MCF 10A (cell line): ENCODE measurements at regions of chr5 and their contacts with region 1.

Region 1: DNA sequence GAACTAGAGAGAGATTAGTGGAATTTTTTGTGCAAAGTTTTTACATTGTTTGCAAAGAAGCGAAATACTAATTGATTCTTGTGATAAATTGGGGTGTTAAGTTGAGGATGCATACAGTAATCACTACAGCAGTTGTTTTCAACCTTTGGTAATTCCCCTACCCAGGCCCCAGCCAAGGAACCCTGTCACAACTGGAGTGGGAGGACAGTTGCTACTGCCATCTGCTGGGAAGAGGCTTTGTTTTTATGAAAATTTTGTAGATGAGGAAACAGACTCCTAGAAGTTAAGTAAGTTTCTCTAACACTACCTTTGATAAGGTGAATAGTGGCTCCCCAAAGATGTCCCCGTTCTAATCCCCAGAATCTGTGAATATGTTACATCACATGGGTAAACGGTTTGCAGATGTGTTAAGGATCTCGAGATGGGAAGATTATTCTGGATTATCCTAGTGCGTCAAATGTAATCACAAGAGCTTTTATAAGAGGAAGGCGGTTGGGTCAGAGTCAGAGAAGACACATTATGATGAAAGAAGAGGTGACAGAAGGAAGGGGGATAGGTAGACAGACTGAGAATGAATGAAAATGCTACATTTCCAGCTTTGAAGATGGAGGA is 34.0 kb upstream of the PPP1R2B start:
- DNase-seq: peak; percentile 8
- H3K4me3 Mint-ChIP-seq: no peak overlapping the region
- H3K27ac Mint-ChIP-seq: no peak overlapping the region
- H3K4me1 Mint-ChIP-seq: no peaks in the 10 kb centered on the region
- H3K27me3 Mint-ChIP-seq: no peaks in the 10 kb centered on the region
- CTCF ChIP-seq: peak; percentile 69

Region 2: DNA sequence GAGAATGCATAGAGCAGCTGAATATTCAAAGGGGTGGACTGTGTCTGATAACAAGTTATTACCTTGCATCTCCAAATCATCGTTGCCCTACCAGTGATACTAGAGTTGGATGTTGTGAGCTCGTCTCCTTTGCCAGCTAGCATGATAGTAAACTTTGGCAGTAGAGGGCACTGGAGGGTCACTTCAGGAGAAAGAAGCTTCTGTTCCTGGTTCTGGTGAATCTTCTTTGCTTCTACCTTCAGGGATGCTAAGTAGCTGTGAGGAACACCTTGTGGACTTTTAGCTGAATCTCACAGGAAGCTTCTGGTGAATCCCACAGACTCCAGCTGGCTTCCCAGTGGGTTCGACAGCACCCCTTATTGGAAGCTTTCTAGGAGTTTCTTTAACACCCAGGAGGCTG is 1115.8 kb before region 1 on chr5:
- CTCF ChIA-PET with region 1: interaction called, 16 read pairs
- POLR2A ChIA-PET with region 1: no interaction called
- intact Hi-C with region 1: loop called (anchors 1 kb)
- DNase-seq: peak; percentile 4
- H3K4me3 Mint-ChIP-seq: no peak overlapping the region
- H3K27ac Mint-ChIP-seq: no peak overlapping the region
- H3K4me1 Mint-ChIP-seq: no peaks in the 10 kb centered on the region
- H3K27me3 Mint-ChIP-seq: no peaks in the 10 kb centered on the region
- CTCF ChIP-seq: peak; percentile 56

Region 3: DNA sequence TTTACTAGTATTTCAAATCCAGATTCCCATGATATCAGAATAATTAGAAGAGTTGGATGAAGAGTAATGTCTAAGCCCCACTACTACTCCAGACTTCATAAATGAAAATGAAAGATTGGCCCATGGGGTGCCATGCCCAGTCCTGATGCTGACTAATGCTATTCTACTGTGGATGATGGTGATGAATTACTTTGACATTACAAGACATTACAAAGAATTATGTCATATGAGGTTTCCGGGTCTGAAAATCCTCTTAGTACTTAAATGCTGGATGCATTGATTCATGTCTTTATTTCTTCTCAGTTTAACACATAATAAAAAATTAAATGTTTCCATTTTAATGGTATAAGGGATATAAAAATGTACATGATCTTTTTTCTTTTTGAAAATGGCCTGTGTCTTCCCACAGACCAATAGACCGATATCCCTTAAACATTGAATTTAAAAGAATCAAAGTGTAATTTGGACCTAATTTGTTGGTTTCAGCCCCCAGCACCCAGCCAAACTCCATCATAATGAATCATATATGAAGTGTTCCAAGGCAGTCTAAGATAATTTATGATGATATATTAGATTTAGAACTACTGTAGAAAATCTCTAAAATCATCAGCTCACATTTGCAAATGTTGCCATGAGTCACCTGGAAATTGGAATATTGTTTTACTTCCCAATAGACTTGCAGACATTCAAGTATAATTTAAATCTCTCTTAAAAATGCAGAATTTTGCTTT is 712.8 kb before region 1 on chr5:
- CTCF ChIA-PET with region 1: no interaction called
- POLR2A ChIA-PET with region 1: no interaction called
- intact Hi-C with region 1: loop called (anchors 5 kb)
- DNase-seq: no peak
- H3K4me3 Mint-ChIP-seq: no peak overlapping the region
- H3K27ac Mint-ChIP-seq: no peak overlapping the region
- H3K4me1 Mint-ChIP-seq: no peaks in the 10 kb centered on the region
- H3K27me3 Mint-ChIP-seq: no peaks in the 10 kb centered on the region
- CTCF ChIP-seq: no peak

Region 4: GRCh38 chr5:156631005-156631404 is 185.1 kb before region 1 on chr5:
- CTCF ChIA-PET with region 1: no interaction called
- POLR2A ChIA-PET with region 1: no interaction called
- intact Hi-C with region 1: no loop called
- DNase-seq: no peak
- H3K4me3 Mint-ChIP-seq: no peak overlapping the region
- H3K27ac Mint-ChIP-seq: no peak overlapping the region
- H3K4me1 Mint-ChIP-seq: no peaks in the 10 kb centered on the region
- H3K27me3 Mint-ChIP-seq: no peaks in the 10 kb centered on the region
- CTCF ChIP-seq: no peak

Region 5: DNA sequence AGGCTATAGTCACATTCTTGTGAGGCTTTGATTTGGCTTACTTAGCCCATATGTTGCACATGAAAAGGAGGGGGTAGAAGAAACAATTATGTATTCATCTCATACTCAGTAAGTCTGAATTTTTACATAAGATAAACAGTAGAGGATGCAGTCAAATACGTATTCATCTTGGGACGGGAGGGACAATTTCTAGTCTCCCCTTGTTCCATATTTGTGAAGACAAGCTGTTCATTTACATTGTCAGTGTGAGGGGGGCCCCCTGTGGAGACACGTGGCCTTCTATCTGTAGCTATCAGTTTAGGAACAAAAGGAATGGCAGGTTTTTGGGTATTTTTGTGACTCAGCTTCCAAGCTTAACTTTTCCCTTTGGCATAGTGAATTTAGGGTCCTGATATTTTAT is 15.2 kb before region 1 on chr5:
- CTCF ChIA-PET with region 1: interaction called, 25 read pairs
- POLR2A ChIA-PET with region 1: no interaction called
- intact Hi-C with region 1: no loop called
- DNase-seq: no peak
- H3K4me3 Mint-ChIP-seq: no peak overlapping the region
- H3K27ac Mint-ChIP-seq: no peak overlapping the region
- H3K4me1 Mint-ChIP-seq: no peaks in the 10 kb centered on the region
- H3K27me3 Mint-ChIP-seq: no peaks in the 10 kb centered on the region
- CTCF ChIP-seq: no peak

Region 6: DNA sequence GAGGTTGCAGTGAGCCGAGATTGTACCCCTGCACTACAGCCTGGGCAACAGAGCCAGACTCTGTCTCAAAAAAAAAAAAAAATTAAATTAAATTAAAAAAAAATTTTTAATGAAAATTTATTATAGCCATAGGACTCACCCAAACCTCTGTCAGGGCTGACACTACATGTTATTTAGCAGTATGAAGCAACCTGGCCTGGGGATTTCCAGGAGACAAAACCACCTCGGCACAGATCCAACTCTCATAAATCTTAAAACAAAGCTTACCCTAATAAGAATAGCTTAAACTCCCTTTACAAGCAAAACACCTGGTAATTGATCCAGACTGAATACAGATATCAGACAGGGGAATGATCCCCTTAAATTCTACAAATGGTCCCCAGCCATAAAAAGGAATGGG is 72.4 kb after region 1 on chr5:
- CTCF ChIA-PET with region 1: no interaction called
- POLR2A ChIA-PET with region 1: no interaction called
- intact Hi-C with region 1: no loop called
- DNase-seq: peak; percentile 2
- H3K4me3 Mint-ChIP-seq: no peak overlapping the region
- H3K27ac Mint-ChIP-seq: no peak overlapping the region
- H3K4me1 Mint-ChIP-seq: peaks cover 8% of the 10 kb centered on the region
- H3K27me3 Mint-ChIP-seq: no peaks in the 10 kb centered on the region
- CTCF ChIP-seq: no peak

Region 7: DNA sequence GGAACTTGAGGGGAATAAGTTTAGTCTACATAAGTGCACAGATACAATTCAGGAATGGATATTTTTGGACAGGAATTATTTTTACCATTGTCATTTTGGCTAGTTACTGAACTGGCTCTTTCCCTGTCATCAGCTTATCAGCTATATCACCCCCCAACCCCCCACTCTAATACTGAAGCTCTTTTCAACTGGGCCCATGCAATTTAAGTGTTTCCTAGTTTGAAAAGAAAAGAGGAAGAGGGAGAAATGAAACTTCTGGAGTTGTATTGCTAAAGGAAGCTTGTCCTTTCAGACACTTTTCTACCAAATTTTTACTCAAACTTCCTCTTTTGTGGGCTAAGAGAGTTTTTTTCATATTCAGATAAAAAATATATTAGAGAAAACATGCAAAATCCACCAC is 165.4 kb after region 1 on chr5:
- CTCF ChIA-PET with region 1: no interaction called
- POLR2A ChIA-PET with region 1: no interaction called
- intact Hi-C with region 1: no loop called
- DNase-seq: no peak
- H3K4me3 Mint-ChIP-seq: no peak overlapping the region
- H3K27ac Mint-ChIP-seq: no peak overlapping the region
- H3K4me1 Mint-ChIP-seq: no peaks in the 10 kb centered on the region
- H3K27me3 Mint-ChIP-seq: peaks cover 57% of the 10 kb centered on the region
- CTCF ChIP-seq: no peak